Prostate gland (tissue), 2 donors: ENCODE measurements at regions of chr5 and their contacts with region 1.

Region 1: GRCh38 chr5:177133091-177133852 is at the start of gene NSD1:
- DNase-seq: peak; percentile 81
- H3K4me3 ChIP-seq: peak within 1 kb of the TSS; percentile 74
- H3K27ac ChIP-seq: peak within 1 kb of the TSS; percentile 86 to 91
- H3K4me1 ChIP-seq: peaks cover 9% of the 10 kb centered on the region
- H3K27me3 ChIP-seq: no peaks in the 10 kb centered on the region
- CTCF ChIP-seq: no peak
- POLR2A ChIP-seq: peak; percentile 46
- total RNA-seq, gene NSD1: 37.2 to 53.9 TPM

Region 2: DNA sequence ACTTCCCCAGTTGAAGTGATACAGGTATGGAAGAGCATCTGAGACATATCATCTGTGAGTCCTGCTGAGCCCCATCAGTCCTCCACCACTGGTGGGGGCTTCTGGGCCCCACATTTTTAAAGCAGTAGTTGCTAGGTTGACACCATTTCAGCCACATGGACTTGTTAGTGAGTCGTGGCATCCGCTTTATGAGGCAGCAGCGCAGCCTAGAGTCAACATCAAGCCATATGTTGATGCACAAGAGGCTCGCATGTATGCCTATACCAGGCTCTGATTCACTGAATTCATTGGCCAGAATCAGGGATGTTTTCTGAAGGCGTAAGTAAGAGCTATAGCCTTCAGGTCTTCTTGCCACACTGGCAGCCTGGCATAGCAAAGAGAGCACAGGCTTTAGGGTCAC is 84.0 kb before region 1 on chr5:
- intact Hi-C with region 1: no loop called
- DNase-seq: no peak
- H3K4me3 ChIP-seq: no peak overlapping the region
- H3K27ac ChIP-seq: no peak overlapping the region
- H3K4me1 ChIP-seq: no peaks in the 10 kb centered on the region
- H3K27me3 ChIP-seq: no peaks in the 10 kb centered on the region
- CTCF ChIP-seq: no peak
- POLR2A ChIP-seq: no peak

Region 3: GRCh38 chr5:177368869-177369644 is 235.8 kb after region 1 on chr5:
- intact Hi-C with region 1: loop called (anchors 5 kb)
- DNase-seq: no peak
- H3K4me3 ChIP-seq: no peak overlapping the region
- H3K27ac ChIP-seq: peak overlapping the region in 1 of 2 donors; percentile 77
- H3K4me1 ChIP-seq: peaks cover 12% of the 10 kb centered on the region
- H3K27me3 ChIP-seq: no peaks in the 10 kb centered on the region
- CTCF ChIP-seq: peak in 2 of 4 experiments; percentile 35 to 43
- POLR2A ChIP-seq: no peak